SK-N-SH (cell line): ENCODE measurements at regions of chr11 and their contacts with region 1.

Region 1: DNA sequence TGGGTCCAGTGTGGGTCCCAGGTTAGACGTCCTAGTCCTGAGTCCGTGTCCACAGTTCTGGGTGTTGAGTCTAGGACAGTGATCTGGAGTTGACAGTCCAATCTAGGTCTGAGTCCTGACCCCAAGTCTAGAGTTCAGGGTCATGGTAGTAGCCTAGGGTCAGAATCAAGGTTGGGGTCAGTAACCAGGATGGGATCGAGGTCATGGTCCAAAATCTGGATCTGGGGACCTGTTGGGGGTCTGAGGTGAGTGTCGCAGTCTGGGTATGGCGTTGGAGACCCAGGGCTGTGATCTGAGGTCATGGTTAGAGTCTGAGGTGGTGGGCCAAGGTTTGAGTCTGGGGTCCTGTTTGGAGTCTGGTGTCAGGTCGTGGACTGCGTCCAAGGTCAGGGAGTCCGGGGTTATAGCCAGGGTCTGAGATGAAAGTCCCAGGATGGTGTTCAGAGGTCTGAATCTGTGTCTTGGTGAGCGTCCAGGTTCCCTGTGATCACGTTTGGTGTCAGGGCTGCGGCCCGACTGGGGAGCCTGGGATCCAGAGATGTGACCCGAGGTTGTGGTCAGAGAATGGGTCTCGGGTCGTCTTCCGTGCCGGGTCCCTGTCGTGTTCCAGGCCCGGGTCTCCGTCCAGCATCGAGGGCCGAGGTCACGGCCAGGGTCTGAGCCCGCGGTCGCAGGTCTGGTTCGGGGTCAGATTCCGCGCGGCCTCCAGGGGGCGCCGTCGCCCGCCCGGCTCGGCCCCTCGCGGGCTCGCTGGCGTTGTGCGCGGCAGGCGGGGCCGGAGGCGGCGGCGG is 445 bp upstream of the GRK2 start:
- DNase-seq: peak; percentile 94
- H3K4me3 ChIP-seq: peak overlapping the region in 1 of 2 experiments; percentile 90; a peak in 2 of 4 replicates
- H3K27ac ChIP-seq: peak overlapping the region in 1 of 2 experiments; percentile 53; a peak in 2 of 4 replicates
- H3K4me1 ChIP-seq: peaks cover 14 to 35% of the 10 kb centered on the region in 2 experiments; a peak in 2 of 4 replicates
- H3K27me3 ChIP-seq: no peaks in the 10 kb centered on the region
- CTCF ChIP-seq: peak; percentile 67
- EP300 ChIP-seq: no peak
- RAD21 ChIP-seq: peak; percentile 64

Region 2: DNA sequence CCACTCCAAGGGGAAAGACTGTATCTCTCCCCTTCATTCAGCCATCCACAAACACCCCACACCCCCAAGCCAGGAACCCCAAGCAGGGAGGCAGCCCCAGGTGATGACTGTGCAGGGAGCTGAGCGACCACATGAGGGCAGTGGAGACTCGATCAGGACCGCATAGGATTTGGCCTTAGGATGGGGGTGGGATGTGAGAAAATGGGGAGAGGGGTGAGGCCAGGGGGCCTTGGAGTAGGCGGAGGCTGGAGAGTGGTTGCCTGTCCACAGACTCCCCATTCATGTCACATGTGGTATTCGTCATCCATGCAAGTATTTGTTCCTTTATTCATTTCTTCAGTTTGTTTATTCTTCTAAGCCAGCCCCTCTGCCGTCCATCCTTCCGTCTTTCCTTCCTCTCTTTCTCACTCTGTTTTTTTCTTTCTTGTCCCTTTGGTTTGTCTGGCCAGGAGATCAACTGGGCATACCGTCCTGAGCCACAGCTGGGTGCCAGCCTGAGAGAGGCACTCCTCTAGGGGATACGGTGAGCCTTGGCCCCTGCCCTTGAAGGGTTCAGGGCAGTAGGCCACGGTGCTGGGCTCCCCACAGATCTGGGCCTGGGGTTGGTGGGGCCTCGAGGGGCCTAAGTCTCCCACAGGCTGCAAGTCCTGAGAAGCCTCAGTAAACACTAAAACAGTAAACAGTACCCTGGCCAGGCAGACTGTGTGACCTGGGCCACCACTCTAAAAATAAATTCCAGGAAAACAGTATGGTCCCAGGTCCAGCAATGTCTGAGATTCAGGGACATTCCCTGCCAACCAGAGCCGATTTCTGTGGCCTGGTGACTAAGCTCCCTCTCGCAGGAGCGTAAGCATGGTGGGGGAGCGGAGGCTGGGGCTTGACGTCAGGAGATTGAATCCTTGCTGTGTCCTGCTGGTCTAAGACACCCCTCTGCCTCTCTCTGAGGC is 211.7 kb before region 1 on chr11:
- CTCF ChIA-PET with region 1: interaction called, 10 read pairs
- POLR2A ChIA-PET with region 1: no interaction called
- DNase-seq: peak; percentile 92
- H3K4me3 ChIP-seq: no peak overlapping the region; a peak in 1 of 4 replicates
- H3K27ac ChIP-seq: peak overlapping the region in 1 of 2 experiments; percentile 59; a peak in 2 of 4 replicates
- H3K4me1 ChIP-seq: peaks cover 9 to 12% of the 10 kb centered on the region in 2 experiments; a peak in 2 of 4 replicates
- H3K27me3 ChIP-seq: no peaks in the 10 kb centered on the region
- CTCF ChIP-seq: peak; percentile 79
- EP300 ChIP-seq: no peak
- RAD21 ChIP-seq: peak; percentile 75

Region 3: GRCh38 chr11:67195971-67196456 is 69.8 kb before region 1 on chr11:
- CTCF ChIA-PET with region 1: no interaction called
- POLR2A ChIA-PET with region 1: no interaction called
- DNase-seq: no peak
- H3K4me3 ChIP-seq: no peak overlapping the region
- H3K27ac ChIP-seq: no peak overlapping the region
- H3K4me1 ChIP-seq: peaks cover 0 to 22% of the 10 kb centered on the region in 2 experiments; a peak in 1 of 4 replicates
- H3K27me3 ChIP-seq: no peaks in the 10 kb centered on the region
- CTCF ChIP-seq: no peak
- EP300 ChIP-seq: no peak
- RAD21 ChIP-seq: no peak

Region 4: DNA sequence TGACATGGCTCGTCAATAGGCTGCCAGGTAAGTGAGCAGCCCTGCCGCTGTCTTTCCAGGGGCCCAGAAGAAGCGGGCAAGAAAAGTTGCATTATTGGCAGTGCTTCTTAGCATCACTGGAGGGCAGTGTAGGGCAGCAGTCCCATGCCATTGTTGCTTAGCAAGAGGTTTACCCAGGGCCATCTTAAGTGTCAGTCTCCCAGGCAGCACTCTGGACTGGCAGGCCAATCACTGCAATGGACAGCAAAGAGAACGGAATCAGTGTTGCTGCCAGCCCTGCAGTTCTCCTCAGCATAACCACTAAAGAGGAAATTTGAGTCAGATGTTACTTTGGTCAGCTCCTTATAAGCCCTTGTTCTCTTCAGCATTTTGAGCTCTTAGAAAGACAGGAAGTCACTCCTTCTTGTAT is 13.0 kb before region 1 on chr11:
- CTCF ChIA-PET with region 1: interaction called, 54 read pairs
- POLR2A ChIA-PET with region 1: interaction called, 3 read pairs
- DNase-seq: no peak
- H3K4me3 ChIP-seq: no peak overlapping the region
- H3K27ac ChIP-seq: no peak overlapping the region; a peak in 1 of 4 replicates
- H3K4me1 ChIP-seq: no peaks in the 10 kb centered on the region
- H3K27me3 ChIP-seq: no peaks in the 10 kb centered on the region
- CTCF ChIP-seq: peak; percentile 50
- EP300 ChIP-seq: no peak
- RAD21 ChIP-seq: peak; percentile 43

Region 5: DNA sequence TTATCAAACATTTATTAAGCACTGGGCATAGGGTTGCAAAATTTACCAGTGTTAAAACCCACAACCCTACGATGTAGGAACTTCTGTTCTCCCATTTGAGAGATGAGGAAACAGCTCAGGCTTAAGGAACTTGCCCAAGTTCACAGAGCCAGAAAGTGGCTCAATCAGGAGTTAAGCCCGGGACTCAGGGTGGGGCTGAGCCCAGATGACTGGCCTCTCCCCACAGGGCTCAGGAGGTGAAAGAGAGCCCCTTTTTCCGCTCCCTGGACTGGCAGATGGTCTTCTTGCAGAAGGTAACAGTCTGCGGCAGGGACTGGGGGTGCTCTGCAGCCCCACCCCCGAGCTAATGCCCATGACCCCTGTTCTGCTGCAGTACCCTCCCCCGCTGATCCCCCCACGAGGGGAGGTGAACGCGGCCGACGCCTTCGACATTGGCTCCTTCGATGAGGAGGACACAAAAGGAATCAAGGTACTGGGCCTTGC is 17.7 kb after region 1 on chr11:
- CTCF ChIA-PET with region 1: interaction called, 29 read pairs
- POLR2A ChIA-PET with region 1: interaction called, 3 read pairs
- DNase-seq: no peak
- H3K4me3 ChIP-seq: no peak overlapping the region
- H3K27ac ChIP-seq: no peak overlapping the region
- H3K4me1 ChIP-seq: peaks cover 9 to 18% of the 10 kb centered on the region in 2 experiments; a peak in 3 of 4 replicates
- H3K27me3 ChIP-seq: no peaks in the 10 kb centered on the region
- CTCF ChIP-seq: no peak
- EP300 ChIP-seq: no peak
- RAD21 ChIP-seq: no peak

Region 6: GRCh38 chr11:67303132-67303834 is 37.5 kb after region 1 on chr11 and contains the start of gene SSH3:
- CTCF ChIA-PET with region 1: interaction called, 27 read pairs
- POLR2A ChIA-PET with region 1: no interaction called
- DNase-seq: peak; percentile 89
- H3K4me3 ChIP-seq: peak within 1 kb of the TSS; percentile 87 to 88
- H3K27ac ChIP-seq: peak within 1 kb of the TSS in 1 of 2 experiments; percentile 65; a peak in 1 of 4 replicates
- H3K4me1 ChIP-seq: peaks cover 13 to 17% of the 10 kb centered on the region in 2 experiments; a peak in 2 of 4 replicates
- H3K27me3 ChIP-seq: no peaks in the 10 kb centered on the region
- CTCF ChIP-seq: no peak
- EP300 ChIP-seq: no peak
- RAD21 ChIP-seq: no peak
- polyA plus RNA-seq, gene SSH3: 13.5 and 17.1 TPM in 2 replicates

Region 7: GRCh38 chr11:67345920-67346799 is 80.3 kb after region 1 on chr11:
- CTCF ChIA-PET with region 1: interaction called, 25 read pairs
- POLR2A ChIA-PET with region 1: no interaction called
- DNase-seq: peak; percentile 10
- H3K4me3 ChIP-seq: no peak overlapping the region
- H3K27ac ChIP-seq: no peak overlapping the region
- H3K4me1 ChIP-seq: peaks cover 5 to 29% of the 10 kb centered on the region in 2 experiments; a peak in 1 of 4 replicates
- H3K27me3 ChIP-seq: no peaks in the 10 kb centered on the region
- CTCF ChIP-seq: peak; percentile 77
- EP300 ChIP-seq: no peak
- RAD21 ChIP-seq: peak; percentile 66

Region 8: GRCh38 chr11:67373925-67374618 is 108.2 kb after region 1 on chr11:
- CTCF ChIA-PET with region 1: interaction called, 75 read pairs
- POLR2A ChIA-PET with region 1: no interaction called
- DNase-seq: peak; percentile 69
- H3K4me3 ChIP-seq: peak overlapping the region; percentile 61 to 83
- H3K27ac ChIP-seq: peak overlapping the region; percentile 67 to 96
- H3K4me1 ChIP-seq: peaks cover 39 to 47% of the 10 kb centered on the region in 2 experiments; a peak in 3 of 4 replicates
- H3K27me3 ChIP-seq: no peaks in the 10 kb centered on the region
- CTCF ChIP-seq: peak; percentile 55
- EP300 ChIP-seq: peak in 1 of 2 experiments; percentile 79; a peak in 2 of 4 replicates
- RAD21 ChIP-seq: peak; percentile 17; the same call in 1 of the 2 replicates

Region 9: DNA sequence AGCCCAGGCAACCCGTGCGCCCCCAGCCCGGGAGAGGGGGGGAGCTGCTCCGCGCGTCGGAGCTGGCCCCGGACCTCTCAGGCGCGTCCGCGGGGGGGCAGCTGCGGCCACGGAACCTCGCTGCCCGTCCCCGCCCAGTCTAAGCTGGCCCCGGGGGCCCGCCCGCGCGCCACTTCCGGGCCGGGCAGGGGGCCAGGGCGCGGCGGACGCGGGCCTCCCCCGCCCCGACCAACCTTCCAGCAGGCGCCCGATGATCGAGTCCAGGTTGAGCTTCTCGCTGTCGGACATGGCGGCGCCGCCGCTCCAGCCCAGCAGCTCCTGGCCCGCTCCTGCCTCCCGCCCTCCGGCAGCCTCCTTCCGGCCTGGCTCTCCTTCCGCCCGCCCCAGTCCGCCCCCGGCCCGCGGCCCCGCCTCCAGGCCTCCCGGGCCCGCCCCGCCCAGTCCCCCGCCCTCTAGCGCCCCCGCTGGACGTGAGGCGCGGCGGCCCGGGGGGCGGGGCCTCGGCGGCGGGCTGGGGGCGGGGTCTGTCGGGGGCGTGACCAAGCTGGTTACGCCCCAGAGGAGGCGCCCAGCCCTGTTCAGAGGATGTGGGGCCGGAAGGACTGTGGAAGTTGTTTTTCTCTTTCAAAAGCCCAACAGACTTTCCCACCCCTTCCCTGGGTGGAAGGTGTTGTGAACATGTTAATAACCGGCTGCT is 135.8 kb after region 1 on chr11 and contains the start of gene PPP1CA:
- CTCF ChIA-PET with region 1: no interaction called
- POLR2A ChIA-PET with region 1: no interaction called
- DNase-seq: peak; percentile 100
- H3K4me3 ChIP-seq: peak within 1 kb of the TSS; percentile 85 to 89
- H3K27ac ChIP-seq: peak within 1 kb of the TSS; percentile 81 to 91
- H3K4me1 ChIP-seq: peaks cover 9 to 17% of the 10 kb centered on the region in 2 experiments; a peak in 2 of 4 replicates
- H3K27me3 ChIP-seq: no peaks in the 10 kb centered on the region
- CTCF ChIP-seq: peak; percentile 27; the same call in 1 of the 2 replicates
- EP300 ChIP-seq: no peak
- RAD21 ChIP-seq: peak; percentile 22
- polyA plus RNA-seq, gene PPP1CA: 210 and 261 TPM in 2 replicates